Psoas muscle (tissue), 8 donors: ENCODE measurements at regions of chr5 and their contacts with region 1.

Region 1: DNA sequence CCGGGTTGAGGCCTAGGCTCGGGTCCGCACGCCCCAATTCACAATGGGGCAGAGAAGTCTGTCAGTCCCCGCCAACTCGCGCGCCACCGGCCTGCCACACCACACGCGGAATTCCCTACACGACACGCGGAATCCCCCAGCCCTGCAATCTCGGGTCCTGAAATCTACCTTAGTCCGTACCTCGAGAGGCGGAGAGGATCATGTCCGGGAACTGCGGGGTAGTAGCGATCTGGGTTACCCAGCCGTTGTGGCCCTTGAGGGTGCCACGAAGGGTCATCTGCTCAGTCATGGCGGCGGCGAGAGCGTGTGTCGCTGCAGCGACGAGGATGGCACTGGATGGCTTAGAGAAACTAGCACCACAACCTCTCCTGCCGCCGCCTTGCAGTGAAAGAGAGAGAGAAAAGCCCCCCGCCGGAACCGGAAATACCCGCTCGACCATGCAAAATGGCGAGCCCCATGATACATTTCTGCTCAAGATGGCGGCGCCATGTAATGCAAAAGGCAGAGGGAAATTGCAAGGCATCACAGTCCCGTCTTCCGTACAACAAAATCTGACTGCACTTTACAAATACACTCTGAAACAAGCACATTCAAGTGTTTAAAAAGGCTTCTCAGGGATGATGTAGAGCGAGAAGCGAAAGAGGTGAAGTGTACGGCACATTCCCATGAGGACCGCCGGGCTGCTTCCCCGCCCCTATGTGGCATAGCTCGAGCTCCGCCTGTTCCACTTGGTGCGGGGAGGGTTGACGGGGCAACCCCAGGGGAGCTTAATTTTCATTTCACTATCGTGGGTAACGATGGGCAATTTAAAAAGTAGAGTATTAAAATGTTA is at the start of gene RACK1:
- DNase-seq: peak; percentile 90 to 93
- ATAC-seq: peak; percentile 69 to 72 (median 72)
- H3K4me3 ChIP-seq: peak within 1 kb of the TSS; percentile 95
- H3K27ac ChIP-seq: peak within 1 kb of the TSS; percentile 98
- H3K4me1 ChIP-seq: peaks cover 45% of the 10 kb centered on the region
- H3K27me3 ChIP-seq: no peaks in the 10 kb centered on the region
- CTCF ChIP-seq: no peak
- total RNA-seq, gene RACK1: 832 to 1,110 (median 978) TPM

Region 2: GRCh38 chr5:181207214-181208107 is 36.3 kb before region 1 on chr5:
- intact Hi-C with region 1: loop called in 1 of 2 experiments (anchors 1 kb)
- DNase-seq: peak; percentile 74 to 80
- ATAC-seq: peak; percentile 16 to 53 (median 20)
- H3K4me3 ChIP-seq: peak overlapping the region; percentile 76
- H3K27ac ChIP-seq: peak overlapping the region; percentile 93
- H3K4me1 ChIP-seq: peaks cover 34% of the 10 kb centered on the region
- H3K27me3 ChIP-seq: no peaks in the 10 kb centered on the region
- CTCF ChIP-seq: no peak

Region 3: DNA sequence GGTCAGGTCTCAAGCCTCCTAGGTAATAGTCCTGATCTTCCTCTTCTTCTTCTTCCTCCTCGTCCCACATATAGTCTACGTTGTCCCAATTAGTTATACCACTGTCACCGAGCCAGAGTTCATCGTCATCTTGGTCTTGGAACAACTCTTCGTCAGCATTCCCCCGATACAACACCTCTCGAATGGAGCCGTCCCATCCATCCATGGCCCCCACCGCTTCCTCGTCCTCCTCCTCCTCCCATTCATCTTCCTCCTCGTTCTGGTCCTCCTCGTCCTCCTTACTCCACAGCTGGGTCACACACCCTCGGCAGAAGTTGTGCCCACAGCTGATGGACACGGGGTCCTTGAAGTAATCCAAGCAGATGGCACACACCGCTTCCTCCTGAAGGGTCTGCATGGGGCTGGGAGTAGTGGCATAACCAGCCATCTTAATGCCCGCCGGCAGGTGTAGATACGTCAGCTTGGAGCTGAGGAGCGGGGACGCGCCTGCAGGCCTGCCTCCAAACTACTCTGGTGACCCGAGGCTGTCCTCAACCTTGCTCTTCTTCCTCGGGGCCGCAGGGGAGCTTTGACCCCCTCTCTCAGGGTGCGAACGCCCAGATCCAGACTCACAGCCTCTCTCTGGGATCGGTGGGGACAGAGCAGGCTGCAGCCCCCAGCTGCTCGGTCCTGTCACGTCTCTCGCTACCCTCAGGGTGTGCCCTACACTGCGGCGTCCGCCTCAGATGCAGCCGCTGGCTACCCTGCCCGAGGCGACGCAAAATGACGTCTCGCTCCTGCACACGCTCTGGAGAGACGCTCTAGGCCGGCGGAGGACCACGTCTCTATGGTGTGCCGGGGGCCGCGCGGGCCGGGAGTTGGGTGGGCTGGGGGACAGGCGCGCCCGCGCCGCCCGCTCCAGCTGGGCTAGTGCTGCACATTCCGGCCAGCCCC is 16.9 kb after region 1 on chr5 and contains the start of gene TRIM52:
- intact Hi-C with region 1: loop called in 1 of 2 experiments (anchors 2 kb)
- DNase-seq: peak; percentile 94 to 97
- ATAC-seq: peak; percentile 90 to 95 (median 92)
- H3K4me3 ChIP-seq: peak within 1 kb of the TSS; percentile 100
- H3K27ac ChIP-seq: peak within 1 kb of the TSS; percentile 99
- H3K4me1 ChIP-seq: peaks cover 55% of the 10 kb centered on the region
- H3K27me3 ChIP-seq: no peaks in the 10 kb centered on the region
- CTCF ChIP-seq: no peak
- total RNA-seq, gene TRIM52: 3.0 to 5.8 (median 5.3) TPM